ENCODE measurements at regions of chr4 and their contacts with region 1.

Region 1: GRCh38 chr4:107989537-107990386 is at the start of gene HADH:
- DNase-seq: peak; percentile 97
- ATAC-seq: peak; percentile 98
- H3K4me3 Mint-ChIP-seq: peak within 1 kb of the TSS; percentile 94
- H3K27ac Mint-ChIP-seq: peak within 1 kb of the TSS; percentile 89
- H3K4me1 Mint-ChIP-seq: peaks cover 46% of the 10 kb centered on the region
- H3K27me3 Mint-ChIP-seq: no peaks in the 10 kb centered on the region
- CTCF ChIP-seq: no peak
- total RNA-seq, gene HADH: 21.2 and 22.8 TPM in 2 replicates

Region 2: DNA sequence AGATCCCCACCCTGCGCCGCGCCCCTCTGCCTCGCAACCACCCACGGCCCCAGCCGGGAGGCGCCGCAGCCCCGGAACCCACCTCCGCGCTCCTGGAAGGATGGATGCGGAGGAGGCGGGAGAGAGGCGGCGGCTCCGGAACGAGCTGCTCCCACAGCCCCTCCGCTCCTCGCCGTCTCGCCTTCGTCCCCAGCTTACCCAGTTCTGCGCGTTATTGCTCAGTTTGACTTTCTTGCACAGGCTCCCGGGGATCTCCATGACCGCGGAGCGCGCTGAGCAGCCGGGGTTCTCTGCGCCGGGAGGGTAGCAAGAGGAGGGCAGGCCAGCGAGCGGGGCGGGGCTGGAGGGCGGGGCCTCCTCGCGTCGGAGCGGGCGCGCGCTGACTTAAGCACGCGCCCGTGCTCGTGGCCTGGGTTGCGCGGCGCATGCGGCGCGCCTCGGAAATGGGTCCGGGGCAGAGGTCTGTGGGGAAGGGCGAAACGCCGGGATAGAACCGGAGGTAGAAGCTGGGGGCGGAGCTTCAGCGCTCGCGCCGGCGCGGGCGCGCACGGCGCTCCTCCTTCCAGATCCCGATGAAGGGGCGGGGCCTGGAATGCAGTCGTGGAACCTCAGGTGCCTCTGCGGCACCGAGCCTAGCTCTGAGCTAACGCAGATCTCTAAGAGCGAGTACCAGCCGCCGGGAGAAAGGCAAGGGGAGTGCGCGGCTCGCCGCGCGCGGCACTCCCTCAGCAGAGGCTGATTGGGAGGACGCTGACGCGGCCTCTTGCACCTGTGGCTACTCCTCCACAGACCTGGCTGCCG is 269.6 kb before region 1 on chr4 and contains the start of gene PAPSS1:
- CTCF ChIA-PET with region 1: no interaction called
- POLR2A ChIA-PET with region 1: no interaction called
- intact Hi-C with region 1: loop called (anchors 1 kb)
- DNase-seq: peak; percentile 92
- ATAC-seq: peak; percentile 87
- H3K4me3 Mint-ChIP-seq: peak within 1 kb of the TSS; percentile 97
- H3K27ac Mint-ChIP-seq: peak within 1 kb of the TSS; percentile 96
- H3K4me1 Mint-ChIP-seq: peaks cover 34% of the 10 kb centered on the region
- H3K27me3 Mint-ChIP-seq: no peaks in the 10 kb centered on the region
- CTCF ChIP-seq: no peak
- total RNA-seq, gene PAPSS1: 31.8 and 34.2 TPM in 2 replicates

Region 3: GRCh38 chr4:107930821-107931774 is 58.7 kb before region 1 on chr4 and contains the start of gene CYP2U1:
- CTCF ChIA-PET with region 1: interaction called, 4 read pairs
- POLR2A ChIA-PET with region 1: interaction called, 13 read pairs
- intact Hi-C with region 1: loop called (anchors 1 kb)
- DNase-seq: peak; percentile 88
- ATAC-seq: peak; percentile 95
- H3K4me3 Mint-ChIP-seq: peak within 1 kb of the TSS; percentile 96
- H3K27ac Mint-ChIP-seq: peak within 1 kb of the TSS; percentile 91
- H3K4me1 Mint-ChIP-seq: peaks cover 41% of the 10 kb centered on the region
- H3K27me3 Mint-ChIP-seq: no peaks in the 10 kb centered on the region
- CTCF ChIP-seq: no peak
- total RNA-seq, gene CYP2U1: 9.2 and 11.6 TPM in 2 replicates

Region 4: GRCh38 chr4:107951551-107951950 is 38.2 kb before region 1 on chr4:
- CTCF ChIA-PET with region 1: no interaction called
- POLR2A ChIA-PET with region 1: interaction called, 6 read pairs
- intact Hi-C with region 1: loop called (anchors 5 kb)
- DNase-seq: no peak
- ATAC-seq: no peak
- H3K4me3 Mint-ChIP-seq: no peak overlapping the region
- H3K27ac Mint-ChIP-seq: no peak overlapping the region
- H3K4me1 Mint-ChIP-seq: no peaks in the 10 kb centered on the region
- H3K27me3 Mint-ChIP-seq: no peaks in the 10 kb centered on the region
- CTCF ChIP-seq: no peak

Region 5: DNA sequence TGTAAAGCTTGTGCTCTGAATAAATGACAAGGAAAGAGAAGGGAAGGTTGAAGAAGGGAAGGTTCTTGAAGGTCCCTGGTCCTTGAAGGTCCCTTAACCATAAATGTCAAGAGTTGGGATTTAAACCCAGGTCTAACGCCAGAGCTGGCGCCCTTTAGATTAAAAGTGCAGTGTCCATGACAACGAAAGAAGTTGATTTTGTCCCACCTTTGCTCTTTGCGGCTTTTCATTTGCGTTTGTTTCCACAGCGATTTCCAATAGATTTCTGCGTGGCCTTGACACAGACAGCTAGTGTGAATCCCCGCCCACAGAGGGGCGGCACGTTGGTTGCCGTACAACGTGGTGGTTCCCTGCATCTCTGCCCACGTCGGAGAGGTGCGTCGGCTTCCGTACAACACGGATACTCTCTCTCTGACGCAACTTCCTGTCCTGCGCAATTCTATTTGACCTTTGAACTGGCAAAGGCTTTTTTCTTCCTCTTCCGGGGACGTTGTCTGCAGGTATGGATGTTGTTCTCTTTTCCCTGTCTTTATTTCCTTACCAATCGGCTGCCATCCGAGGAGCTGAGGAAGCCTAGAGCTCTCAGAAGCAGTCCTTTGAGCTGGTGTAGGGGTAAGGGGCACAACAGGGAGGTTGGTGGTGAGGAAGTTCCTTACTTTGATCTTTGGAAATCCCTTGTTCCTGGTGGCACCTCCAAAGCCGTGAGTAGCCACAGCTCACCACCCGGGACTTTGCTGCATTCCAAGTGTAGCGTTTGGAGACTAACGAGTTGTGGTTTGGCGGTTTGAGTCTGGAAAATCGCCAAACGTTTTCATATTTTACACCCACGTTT is 630.6 kb after region 1 on chr4 and contains the start of gene RPL34:
- CTCF ChIA-PET with region 1: no interaction called
- POLR2A ChIA-PET with region 1: interaction called, 3 read pairs
- intact Hi-C with region 1: loop called (anchors 1 kb)
- DNase-seq: peak; percentile 83
- ATAC-seq: peak; percentile 100
- H3K4me3 Mint-ChIP-seq: peak within 1 kb of the TSS; percentile 95
- H3K27ac Mint-ChIP-seq: peak within 1 kb of the TSS; percentile 95
- H3K4me1 Mint-ChIP-seq: peaks cover 50% of the 10 kb centered on the region
- H3K27me3 Mint-ChIP-seq: no peaks in the 10 kb centered on the region
- CTCF ChIP-seq: no peak
- total RNA-seq, gene RPL34: 2,310 and 2,662 TPM in 2 replicates

Region 6: GRCh38 chr4:109559983-109560686 is 1570.4 kb after region 1 on chr4 and contains the start of gene MCUB:
- CTCF ChIA-PET with region 1: no interaction called
- POLR2A ChIA-PET with region 1: no interaction called
- intact Hi-C with region 1: loop called (anchors 10 kb)
- DNase-seq: peak; percentile 75
- ATAC-seq: peak; percentile 84
- H3K4me3 Mint-ChIP-seq: peak within 1 kb of the TSS; percentile 93
- H3K27ac Mint-ChIP-seq: peak within 1 kb of the TSS; percentile 97
- H3K4me1 Mint-ChIP-seq: peaks cover 49% of the 10 kb centered on the region
- H3K27me3 Mint-ChIP-seq: no peaks in the 10 kb centered on the region
- CTCF ChIP-seq: no peak
- total RNA-seq, gene MCUB: 28.9 and 34.4 TPM in 2 replicates

Measured in activated B cell treated with CpG ODN at 0.5 μM for 24 hours (primary cell).